Activated B cell treated with CpG ODN at 0.5 μM for 24 hours (primary cell): ENCODE measurements at regions of chr9 and their contacts with region 1.

Region 1: DNA sequence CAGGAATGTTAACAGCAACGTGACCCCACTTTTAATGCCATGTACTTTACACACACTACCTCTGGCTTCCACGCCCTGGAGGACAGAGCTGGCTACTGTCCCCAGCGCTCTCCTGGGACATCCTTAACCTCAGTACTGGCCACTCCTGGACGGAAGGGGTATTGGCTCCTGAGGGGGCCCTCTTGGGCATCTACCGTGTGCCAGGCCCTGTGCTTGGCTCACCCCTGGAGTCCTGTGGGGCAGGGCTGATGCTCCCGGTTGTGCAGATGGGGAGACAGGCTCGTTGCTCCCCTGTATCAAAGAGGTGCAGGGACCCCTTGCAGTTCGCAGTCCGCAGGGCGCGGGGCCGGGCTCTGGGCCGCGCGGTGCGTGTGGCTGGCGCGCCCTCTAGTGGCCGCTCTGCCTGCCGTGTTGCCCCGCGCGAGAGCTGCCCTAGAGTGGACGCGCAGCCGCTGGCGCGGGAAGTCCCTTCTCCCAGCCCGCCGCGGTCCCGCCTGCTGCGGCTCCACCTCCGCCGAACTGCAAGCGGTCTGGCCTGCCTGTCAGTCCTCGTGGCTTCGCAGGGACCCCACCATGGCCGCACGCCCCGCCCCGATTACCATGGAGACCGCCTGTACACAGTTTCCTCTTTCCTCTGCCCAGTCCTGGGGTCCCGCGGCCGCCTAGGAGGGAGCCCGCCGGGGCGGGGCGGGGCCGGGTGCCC is at the start of gene WDR38:
- DNase-seq: peak; percentile 81
- ATAC-seq: peak; percentile 82
- H3K4me3 Mint-ChIP-seq: peak within 1 kb of the TSS; percentile 81
- H3K27ac Mint-ChIP-seq: no peak within 1 kb of the TSS
- H3K4me1 Mint-ChIP-seq: peaks cover 15% of the 10 kb centered on the region
- H3K27me3 Mint-ChIP-seq: no peaks in the 10 kb centered on the region
- CTCF ChIP-seq: peak; percentile 92
- total RNA-seq, gene WDR38: not detected in 2 replicates

Region 2: DNA sequence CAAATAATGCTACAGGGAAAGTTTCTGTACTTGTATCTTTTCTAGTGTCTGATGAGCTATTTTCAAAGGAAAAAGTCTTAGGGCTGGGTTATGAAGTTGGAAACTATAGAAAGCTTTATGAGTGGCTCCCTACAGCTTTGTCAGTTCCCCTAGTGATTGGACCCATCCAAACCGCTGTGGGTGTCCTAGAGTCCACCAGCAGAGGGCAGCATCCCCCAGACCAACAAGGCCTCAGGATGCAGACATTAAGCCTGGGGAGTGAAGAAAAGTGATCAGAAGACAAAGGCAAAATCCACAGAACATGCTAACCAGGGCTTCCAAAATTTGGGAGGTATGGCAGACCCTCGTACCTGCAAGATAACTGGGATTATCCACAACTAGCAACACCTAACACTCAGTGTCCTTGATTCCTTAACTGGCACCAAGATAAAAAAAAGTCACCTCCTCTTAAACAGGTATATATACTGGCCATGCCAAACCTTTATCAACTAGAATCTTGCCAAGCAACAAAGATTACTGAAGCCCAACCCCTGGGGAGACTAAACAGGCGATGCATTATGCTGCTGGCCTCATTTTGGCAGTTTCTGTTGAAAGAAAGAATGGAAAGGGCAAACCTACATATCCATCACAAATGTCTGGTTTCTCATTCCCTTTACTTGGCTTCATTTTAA is 235.4 kb before region 1 on chr9:
- CTCF ChIA-PET with region 1: interaction called, 10 read pairs
- POLR2A ChIA-PET with region 1: no interaction called
- intact Hi-C with region 1: loop called (anchors 1 kb)
- DNase-seq: peak; percentile 47
- ATAC-seq: peak; percentile 75
- H3K4me3 Mint-ChIP-seq: no peak overlapping the region
- H3K27ac Mint-ChIP-seq: no peak overlapping the region
- H3K4me1 Mint-ChIP-seq: peaks cover 2% of the 10 kb centered on the region
- H3K27me3 Mint-ChIP-seq: no peaks in the 10 kb centered on the region
- CTCF ChIP-seq: peak; percentile 41

Region 3: DNA sequence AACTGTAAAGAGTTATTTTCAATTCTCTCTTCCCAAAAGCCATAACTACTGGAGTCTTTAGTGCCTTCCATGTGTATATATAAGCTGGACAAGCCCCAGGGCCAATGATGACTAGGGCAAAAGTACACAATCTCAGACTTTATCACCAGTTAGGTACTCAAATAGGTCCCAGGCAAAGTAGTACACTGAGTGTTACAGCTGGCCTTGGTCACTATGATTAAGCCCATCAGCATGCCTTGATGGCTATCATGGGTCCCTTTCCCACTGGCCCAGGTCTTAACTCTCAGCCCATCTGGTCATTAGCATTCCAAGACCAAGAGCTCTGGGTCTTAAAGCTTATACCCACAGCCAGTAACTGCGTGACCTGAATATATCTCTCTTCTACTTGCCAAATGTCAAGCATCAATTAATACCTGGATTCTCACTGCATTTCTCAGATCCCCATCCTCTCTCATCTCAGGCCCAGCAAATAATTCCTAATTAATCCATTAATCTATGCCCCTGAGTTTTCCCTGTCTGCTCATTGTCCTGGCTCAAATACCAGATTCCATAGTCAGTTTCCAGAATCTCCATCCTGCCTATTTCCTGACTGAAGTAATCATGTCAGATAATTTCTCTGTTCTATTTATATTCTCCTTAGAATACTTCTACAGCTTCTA is 144.2 kb before region 1 on chr9:
- CTCF ChIA-PET with region 1: no interaction called
- POLR2A ChIA-PET with region 1: no interaction called
- intact Hi-C with region 1: loop called (anchors 1 kb)
- DNase-seq: no peak
- ATAC-seq: no peak
- H3K4me3 Mint-ChIP-seq: no peak overlapping the region
- H3K27ac Mint-ChIP-seq: no peak overlapping the region
- H3K4me1 Mint-ChIP-seq: no peaks in the 10 kb centered on the region
- H3K27me3 Mint-ChIP-seq: no peaks in the 10 kb centered on the region
- CTCF ChIP-seq: no peak

Region 4: GRCh38 chr9:124800306-124801259 is 52.4 kb before region 1 on chr9:
- CTCF ChIA-PET with region 1: interaction called, 17 read pairs
- POLR2A ChIA-PET with region 1: no interaction called
- intact Hi-C with region 1: no loop called
- DNase-seq: peak; percentile 30
- ATAC-seq: peak; percentile 95
- H3K4me3 Mint-ChIP-seq: peak overlapping the region; percentile 64
- H3K27ac Mint-ChIP-seq: peak overlapping the region; percentile 94
- H3K4me1 Mint-ChIP-seq: peaks cover 40% of the 10 kb centered on the region
- H3K27me3 Mint-ChIP-seq: no peaks in the 10 kb centered on the region
- CTCF ChIP-seq: no peak

Region 5: DNA sequence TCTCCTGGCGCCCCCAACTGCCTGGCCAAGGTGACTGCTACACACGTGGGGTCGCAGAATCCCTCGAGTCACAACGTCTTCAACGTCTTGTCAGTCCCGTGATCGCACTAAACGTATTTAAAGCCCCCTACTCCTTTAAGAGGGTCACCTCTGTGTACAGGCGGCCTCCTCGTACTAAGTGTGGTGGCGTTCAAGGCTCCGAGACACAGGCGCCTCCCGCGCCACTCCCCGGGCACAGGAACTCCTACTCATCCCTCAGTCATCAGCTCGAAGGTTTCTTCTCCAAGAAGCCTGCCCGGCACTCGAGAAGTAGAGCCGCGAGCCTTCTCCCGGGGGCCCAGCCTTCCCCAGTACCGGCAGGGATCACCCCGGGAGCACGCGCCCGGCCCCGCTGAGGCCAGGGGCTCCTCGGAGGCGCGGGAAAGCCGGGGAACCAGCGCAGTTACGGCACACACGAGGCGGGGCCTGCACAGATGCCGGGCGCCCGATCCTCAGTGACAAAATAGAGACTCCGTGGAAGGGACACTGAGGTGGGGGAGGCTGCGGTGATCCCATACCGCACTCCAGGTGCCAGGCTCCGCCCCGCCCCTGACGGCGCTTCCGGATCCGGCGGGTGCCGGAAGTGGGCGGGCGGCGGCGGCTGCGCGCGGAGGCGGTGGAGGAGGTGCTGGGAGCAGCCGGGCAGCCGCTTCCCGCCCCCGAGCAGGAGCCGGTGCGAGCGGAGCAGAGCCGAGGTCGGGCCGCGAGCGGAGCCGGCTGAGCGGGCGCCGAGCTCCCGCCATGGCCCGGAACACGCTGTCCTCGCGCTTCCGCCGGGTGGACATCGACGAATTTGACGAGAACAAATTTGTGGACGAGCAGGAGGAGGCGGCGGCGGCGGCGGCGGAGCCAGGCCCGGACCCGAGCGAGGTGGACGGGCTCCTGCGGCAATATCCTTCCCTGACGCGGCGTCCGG is 15.8 kb after region 1 on chr9:
- CTCF ChIA-PET with region 1: interaction called, 28 read pairs
- POLR2A ChIA-PET with region 1: interaction called, 8 read pairs
- intact Hi-C with region 1: loop called (anchors 1 kb)
- DNase-seq: peak; percentile 97
- ATAC-seq: peak; percentile 69
- H3K4me3 Mint-ChIP-seq: peak overlapping the region; percentile 91
- H3K27ac Mint-ChIP-seq: peak overlapping the region; percentile 97
- H3K4me1 Mint-ChIP-seq: peaks cover 54% of the 10 kb centered on the region
- H3K27me3 Mint-ChIP-seq: no peaks in the 10 kb centered on the region
- CTCF ChIP-seq: no peak

Region 6: DNA sequence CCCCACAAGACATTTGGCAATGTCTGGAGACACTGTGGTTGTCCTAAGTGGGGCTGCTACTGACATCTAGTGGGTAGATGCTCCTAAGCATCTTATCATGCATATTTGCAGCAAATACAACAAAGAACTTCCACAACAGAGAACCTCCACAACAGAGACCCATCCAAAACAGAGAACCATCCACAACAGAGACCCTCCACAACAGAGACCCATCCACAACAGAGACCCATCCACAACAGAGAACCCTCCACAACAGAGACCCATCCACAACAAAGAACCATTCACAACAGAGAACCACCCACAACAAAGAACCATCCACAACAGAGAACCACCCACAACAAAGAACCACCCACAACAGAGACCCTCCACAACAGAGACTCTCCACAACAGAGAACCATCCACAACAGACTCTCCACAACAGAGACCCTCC is 41.8 kb after region 1 on chr9:
- CTCF ChIA-PET with region 1: interaction called, 29 read pairs
- POLR2A ChIA-PET with region 1: no interaction called
- intact Hi-C with region 1: loop called (anchors 1 kb)
- DNase-seq: no peak
- ATAC-seq: peak; percentile 85
- H3K4me3 Mint-ChIP-seq: no peak overlapping the region
- H3K27ac Mint-ChIP-seq: peak overlapping the region; percentile 50
- H3K4me1 Mint-ChIP-seq: no peaks in the 10 kb centered on the region
- H3K27me3 Mint-ChIP-seq: no peaks in the 10 kb centered on the region
- CTCF ChIP-seq: no peak

Region 7: DNA sequence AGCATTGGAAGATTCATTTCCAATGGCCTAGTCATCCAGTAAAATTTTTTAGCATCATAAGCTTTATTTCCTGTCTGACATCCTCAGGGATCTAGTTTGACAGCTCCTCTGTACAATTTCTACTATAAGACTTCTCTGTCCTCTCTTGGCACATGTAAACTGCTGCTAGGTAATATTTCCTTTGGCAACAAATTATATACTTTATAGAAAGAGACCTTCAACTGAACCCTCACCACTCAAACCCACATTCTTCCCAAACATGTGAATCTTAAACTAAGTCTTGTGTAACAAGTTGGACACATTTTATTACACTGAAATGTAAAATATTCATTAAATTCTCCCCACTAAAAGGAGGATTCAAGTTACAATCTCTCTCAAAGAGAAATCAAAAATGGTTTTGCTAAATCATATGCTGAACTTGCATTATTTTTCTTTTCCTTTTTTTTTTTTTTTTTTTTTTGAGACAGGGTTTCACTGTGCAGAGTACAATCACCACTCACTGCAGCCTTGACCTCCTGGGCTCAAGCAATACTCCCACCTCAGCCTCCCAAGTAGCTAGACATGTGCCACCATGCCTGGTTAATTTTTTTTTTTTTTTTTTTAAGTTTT is 253.4 kb after region 1 on chr9:
- CTCF ChIA-PET with region 1: no interaction called
- POLR2A ChIA-PET with region 1: no interaction called
- intact Hi-C with region 1: no loop called
- DNase-seq: no peak
- ATAC-seq: no peak
- H3K4me3 Mint-ChIP-seq: no peak overlapping the region
- H3K27ac Mint-ChIP-seq: no peak overlapping the region
- H3K4me1 Mint-ChIP-seq: peaks cover 5% of the 10 kb centered on the region
- H3K27me3 Mint-ChIP-seq: no peaks in the 10 kb centered on the region
- CTCF ChIP-seq: no peak

Region 8: GRCh38 chr9:125133403-125134329 is 280.7 kb after region 1 on chr9:
- CTCF ChIA-PET with region 1: no interaction called
- POLR2A ChIA-PET with region 1: no interaction called
- intact Hi-C with region 1: no loop called
- DNase-seq: no peak
- ATAC-seq: no peak
- H3K4me3 Mint-ChIP-seq: no peak overlapping the region
- H3K27ac Mint-ChIP-seq: no peak overlapping the region
- H3K4me1 Mint-ChIP-seq: no peaks in the 10 kb centered on the region
- H3K27me3 Mint-ChIP-seq: no peaks in the 10 kb centered on the region
- CTCF ChIP-seq: no peak

Region 9: DNA sequence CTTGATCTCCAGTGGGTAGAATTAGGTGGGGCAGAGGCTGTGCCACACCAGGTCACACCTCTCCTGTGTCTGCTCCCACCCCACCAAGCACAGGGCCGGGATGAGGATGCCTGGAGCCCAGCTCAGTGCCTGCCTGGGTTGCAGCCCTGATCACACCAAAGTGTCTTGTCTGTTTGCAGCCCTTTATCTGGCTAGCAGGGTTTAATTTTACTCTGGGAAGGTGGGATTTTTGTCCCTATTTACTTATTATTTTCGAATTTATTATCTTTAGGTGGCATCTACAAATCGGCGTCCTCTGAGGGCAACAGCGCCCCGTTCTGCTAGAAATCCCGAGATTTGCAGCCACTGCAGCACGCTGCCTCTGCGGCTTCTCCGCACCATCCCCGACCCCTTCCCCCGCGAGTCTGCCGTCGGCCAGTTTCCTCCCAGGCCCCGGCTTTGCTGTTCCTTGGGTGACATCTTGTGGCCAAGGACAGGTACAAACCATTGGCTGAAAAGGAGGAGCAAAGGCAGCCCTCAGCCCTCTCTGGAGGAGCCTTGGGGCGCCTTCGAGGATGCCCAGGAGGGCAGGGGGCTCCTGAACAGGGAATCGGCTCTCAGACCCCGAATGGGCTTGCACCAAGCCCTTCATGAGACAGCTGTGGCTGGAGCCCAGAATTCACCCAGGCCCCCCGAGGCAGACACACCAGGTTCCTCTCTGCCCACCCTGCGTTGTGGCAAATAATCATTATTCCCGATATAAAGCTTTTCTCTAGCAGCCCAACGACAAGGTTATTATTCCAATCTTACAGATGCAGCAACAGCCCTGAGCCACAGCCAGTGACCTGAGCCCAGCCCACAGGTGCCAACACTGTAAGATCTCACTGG is 521.7 kb after region 1 on chr9:
- CTCF ChIA-PET with region 1: no interaction called
- POLR2A ChIA-PET with region 1: no interaction called
- intact Hi-C with region 1: loop called (anchors 5 kb)
- DNase-seq: peak; percentile 43
- ATAC-seq: peak; percentile 95
- H3K4me3 Mint-ChIP-seq: peak overlapping the region; percentile 32
- H3K27ac Mint-ChIP-seq: no peak overlapping the region
- H3K4me1 Mint-ChIP-seq: peaks cover 4% of the 10 kb centered on the region
- H3K27me3 Mint-ChIP-seq: peaks cover 4% of the 10 kb centered on the region
- CTCF ChIP-seq: no peak